ENCODE measurements at regions of chr5 and their contacts with region 1.

Region 1: DNA sequence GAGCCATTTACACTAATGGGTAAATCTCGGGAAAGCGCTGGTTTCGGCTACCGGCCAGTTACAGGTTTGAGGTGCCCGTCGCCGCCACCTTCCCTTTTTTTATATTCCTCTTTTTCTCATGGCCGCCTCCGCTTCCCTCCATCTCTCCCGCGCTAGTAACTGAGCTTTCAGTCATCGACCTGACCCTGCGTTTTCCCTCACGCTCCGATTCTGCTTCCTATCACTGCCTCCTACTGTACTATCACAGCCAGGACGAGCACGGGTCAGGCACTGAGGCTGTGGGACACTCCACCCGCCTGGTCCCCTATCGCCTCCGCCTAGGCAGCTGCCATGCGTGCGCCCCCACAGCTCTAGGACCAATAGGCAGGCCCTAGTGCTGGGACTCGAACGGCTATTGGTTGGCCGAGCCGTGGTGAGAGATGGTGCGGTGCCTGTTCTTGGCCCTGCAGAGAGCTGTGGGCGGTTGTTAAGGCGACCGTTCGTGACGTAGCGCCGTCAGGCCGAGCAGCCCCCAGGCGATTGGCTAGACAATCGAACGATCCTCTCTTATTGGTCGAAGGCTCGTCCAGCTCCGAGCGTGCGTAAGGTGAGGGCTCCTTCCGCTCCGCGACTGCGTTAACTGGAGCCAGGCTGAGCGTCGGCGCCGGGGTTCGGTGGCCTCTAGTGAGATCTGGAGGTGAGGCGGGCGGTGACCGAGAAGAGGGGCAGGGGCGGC is at the start of gene HMGCR:
- DNase-seq: peak; percentile 98 to 99
- ATAC-seq: peak; percentile 98
- H3K4me3 ChIP-seq: peak within 1 kb of the TSS; percentile 88 to 97 (median 91)
- H3K27ac ChIP-seq: peak within 1 kb of the TSS; percentile 87 to 92 (median 90)
- H3K4me1 ChIP-seq: peaks cover 9 to 15% of the 10 kb centered on the region in 2 donors
- H3K27me3 ChIP-seq: no peaks in the 10 kb centered on the region
- CTCF ChIP-seq: no peak
- POLR2A ChIP-seq: peak; percentile 66 to 67
- total RNA-seq, gene HMGCR: 3.2 to 21.1 (median 5.5) TPM

Region 2: DNA sequence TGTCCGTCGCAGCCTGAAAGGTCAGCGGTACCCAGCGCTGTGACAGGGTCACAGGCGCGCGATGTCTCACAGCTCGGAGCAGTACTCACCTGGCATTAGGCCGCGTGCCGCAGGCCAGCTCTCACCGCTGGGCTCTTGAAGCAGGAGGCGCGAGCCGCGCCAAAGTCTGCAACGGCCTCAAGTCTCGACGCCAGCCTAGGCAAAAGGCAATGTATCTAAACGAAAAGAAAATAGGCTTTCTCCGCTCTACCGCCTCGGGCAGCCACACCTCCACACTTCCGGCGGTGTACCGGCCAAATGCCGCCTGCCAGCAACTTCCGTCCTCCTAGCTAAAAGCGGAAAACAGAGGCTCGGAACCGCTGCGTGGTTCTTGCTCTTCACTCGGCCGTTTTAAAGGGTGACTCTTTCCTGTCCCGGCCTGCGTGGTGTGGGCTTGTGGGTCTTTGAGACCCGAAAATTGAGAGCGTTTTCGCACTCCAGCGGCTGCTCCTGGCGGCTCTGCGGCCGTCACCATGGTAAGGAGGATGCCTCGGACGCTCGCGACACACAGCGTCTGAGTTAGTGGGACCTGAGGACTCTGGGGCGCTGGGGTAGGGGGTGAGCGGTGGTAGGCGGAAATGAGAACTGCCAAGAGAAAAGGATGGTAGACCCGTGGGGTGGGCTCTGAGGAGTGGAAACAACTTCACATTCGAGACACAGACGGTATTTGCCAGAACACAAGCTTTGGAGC is 569.8 kb before region 1 on chr5 and contains the starts of genes GFM2 and NSA2:
- in situ Hi-C with region 1: no loop called
- intact Hi-C with region 1: loop called (anchors 1 kb)
- DNase-seq: peak; percentile 86 to 87
- ATAC-seq: peak; percentile 99
- H3K4me3 ChIP-seq: peak within 1 kb of the TSS; percentile 76 to 99 (median 97)
- H3K27ac ChIP-seq: peak within 1 kb of the TSS; percentile 82 to 90 (median 87)
- H3K4me1 ChIP-seq: peaks cover 25 to 29% of the 10 kb centered on the region in 2 donors
- H3K27me3 ChIP-seq: no peaks in the 10 kb centered on the region
- CTCF ChIP-seq: peak in 1 of 5 experiments; percentile 4
- POLR2A ChIP-seq: peak; percentile 21 to 42
- total RNA-seq, gene GFM2: 19.4 to 25.6 (median 23.8) TPM
- total RNA-seq, gene NSA2: 64.4 to 98.2 (median 94.9) TPM

Region 3: GRCh38 chr5:75142566-75143136 is 194.1 kb before region 1 on chr5:
- in situ Hi-C with region 1: no loop called
- intact Hi-C with region 1: no loop called
- DNase-seq: no peak
- ATAC-seq: no peak
- H3K4me3 ChIP-seq: no peak overlapping the region
- H3K27ac ChIP-seq: no peak overlapping the region
- H3K4me1 ChIP-seq: no peaks in the 10 kb centered on the region
- H3K27me3 ChIP-seq: no peaks in the 10 kb centered on the region
- CTCF ChIP-seq: no peak
- POLR2A ChIP-seq: no peak

Region 4: GRCh38 chr5:75236322-75237316 is 100.2 kb before region 1 on chr5 and contains the start of gene ANKRD31:
- in situ Hi-C with region 1: loop called in 1 of 4 experiments (anchors 10 kb)
- intact Hi-C with region 1: loop called (anchors 2 kb)
- DNase-seq: peak; percentile 39 to 57
- ATAC-seq: peak; percentile 90 to 91
- H3K4me3 ChIP-seq: peak within 1 kb of the TSS; percentile 55 to 83 (median 76)
- H3K27ac ChIP-seq: peak within 1 kb of the TSS; percentile 41 to 56 (median 51)
- H3K4me1 ChIP-seq: peaks cover 5 to 6% of the 10 kb centered on the region in 2 donors
- H3K27me3 ChIP-seq: no peaks in the 10 kb centered on the region
- CTCF ChIP-seq: peak; percentile 61 to 85 (median 80)
- POLR2A ChIP-seq: no peak
- total RNA-seq, gene ANKRD31: 0.03 TPM in 1 of 4 donors, not detected in the others

Region 5: DNA sequence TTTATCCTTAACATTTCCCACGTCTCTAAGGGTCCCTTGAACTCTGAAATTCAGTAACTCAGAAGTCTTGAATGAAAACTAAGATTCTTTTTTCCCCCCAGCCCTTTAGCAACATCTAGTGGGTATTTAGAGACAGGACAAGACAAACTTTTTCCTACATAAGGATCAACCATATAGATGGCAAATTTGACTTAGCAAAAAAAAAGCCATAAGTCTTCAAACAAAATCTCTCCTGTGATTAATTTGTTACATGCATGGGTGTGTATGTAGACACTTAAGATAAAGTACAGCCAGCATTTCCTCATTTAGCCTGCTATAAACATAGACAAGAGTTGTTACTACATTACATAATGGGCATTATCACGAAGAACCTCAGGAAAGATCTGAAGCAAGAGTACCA is 71.1 kb before region 1 on chr5:
- in situ Hi-C with region 1: no loop called
- intact Hi-C with region 1: no loop called
- DNase-seq: no peak
- ATAC-seq: no peak
- H3K4me3 ChIP-seq: no peak overlapping the region
- H3K27ac ChIP-seq: no peak overlapping the region
- H3K4me1 ChIP-seq: no peaks in the 10 kb centered on the region
- H3K27me3 ChIP-seq: no peaks in the 10 kb centered on the region
- CTCF ChIP-seq: peak in 2 of 5 experiments; percentile 31 to 35
- POLR2A ChIP-seq: no peak

Region 6: GRCh38 chr5:75681125-75681830 is 344.5 kb after region 1 on chr5:
- in situ Hi-C with region 1: loop called in 2 of 4 experiments (anchors 25 kb)
- intact Hi-C with region 1: loop called (anchors 10 kb)
- DNase-seq: no peak
- ATAC-seq: no peak
- H3K4me3 ChIP-seq: no peak overlapping the region
- H3K27ac ChIP-seq: no peak overlapping the region
- H3K4me1 ChIP-seq: peaks cover 0 to 3% of the 10 kb centered on the region in 2 donors
- H3K27me3 ChIP-seq: no peaks in the 10 kb centered on the region
- CTCF ChIP-seq: peak in 4 of 5 experiments; percentile 40 to 77 (median 60)
- POLR2A ChIP-seq: no peak

Measured in gastrocnemius medialis (tissue), 4 donors.